ENCODE measurements at regions of chr2 and their contacts with region 1.

Region 1: GRCh38 chr2:121974897-121975661 is 219.6 kb downstream of the TSN start:
- DNase-seq: peak; percentile 29
- H3K4me3 Mint-ChIP-seq: peak overlapping the region; percentile 56
- H3K27ac Mint-ChIP-seq: no peak overlapping the region
- H3K4me1 Mint-ChIP-seq: peaks cover 5% of the 10 kb centered on the region
- H3K27me3 Mint-ChIP-seq: peaks cover 3% of the 10 kb centered on the region

Region 2: DNA sequence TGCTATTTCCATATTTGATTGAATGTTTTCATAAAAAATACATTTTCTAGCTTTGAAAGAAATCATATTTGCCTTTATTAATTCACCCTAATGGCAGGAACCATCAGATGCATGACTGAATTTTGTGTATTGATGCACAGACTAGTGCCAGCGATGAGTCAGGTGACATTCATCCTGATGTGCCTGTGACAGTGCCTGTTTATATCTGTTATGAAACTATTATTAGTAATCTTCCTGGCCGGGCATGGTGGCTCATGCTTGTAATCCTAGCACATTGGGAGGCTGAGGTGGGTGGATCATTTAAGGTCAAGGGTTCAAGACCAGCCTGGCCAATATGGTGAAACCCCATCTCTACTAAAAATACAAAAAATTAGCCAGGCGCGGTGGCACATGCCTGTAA is 49.6 kb before region 1 on chr2:
- intact Hi-C with region 1: no loop called
- DNase-seq: no peak
- H3K4me3 Mint-ChIP-seq: no peak overlapping the region
- H3K27ac Mint-ChIP-seq: no peak overlapping the region
- H3K4me1 Mint-ChIP-seq: no peaks in the 10 kb centered on the region
- H3K27me3 Mint-ChIP-seq: no peaks in the 10 kb centered on the region

Region 3: GRCh38 chr2:122145856-122146255 is 170.8 kb after region 1 on chr2:
- intact Hi-C with region 1: loop called (anchors 10 kb)
- DNase-seq: no peak
- H3K4me3 Mint-ChIP-seq: no peak overlapping the region
- H3K27ac Mint-ChIP-seq: no peak overlapping the region
- H3K4me1 Mint-ChIP-seq: no peaks in the 10 kb centered on the region
- H3K27me3 Mint-ChIP-seq: no peaks in the 10 kb centered on the region

Region 4: DNA sequence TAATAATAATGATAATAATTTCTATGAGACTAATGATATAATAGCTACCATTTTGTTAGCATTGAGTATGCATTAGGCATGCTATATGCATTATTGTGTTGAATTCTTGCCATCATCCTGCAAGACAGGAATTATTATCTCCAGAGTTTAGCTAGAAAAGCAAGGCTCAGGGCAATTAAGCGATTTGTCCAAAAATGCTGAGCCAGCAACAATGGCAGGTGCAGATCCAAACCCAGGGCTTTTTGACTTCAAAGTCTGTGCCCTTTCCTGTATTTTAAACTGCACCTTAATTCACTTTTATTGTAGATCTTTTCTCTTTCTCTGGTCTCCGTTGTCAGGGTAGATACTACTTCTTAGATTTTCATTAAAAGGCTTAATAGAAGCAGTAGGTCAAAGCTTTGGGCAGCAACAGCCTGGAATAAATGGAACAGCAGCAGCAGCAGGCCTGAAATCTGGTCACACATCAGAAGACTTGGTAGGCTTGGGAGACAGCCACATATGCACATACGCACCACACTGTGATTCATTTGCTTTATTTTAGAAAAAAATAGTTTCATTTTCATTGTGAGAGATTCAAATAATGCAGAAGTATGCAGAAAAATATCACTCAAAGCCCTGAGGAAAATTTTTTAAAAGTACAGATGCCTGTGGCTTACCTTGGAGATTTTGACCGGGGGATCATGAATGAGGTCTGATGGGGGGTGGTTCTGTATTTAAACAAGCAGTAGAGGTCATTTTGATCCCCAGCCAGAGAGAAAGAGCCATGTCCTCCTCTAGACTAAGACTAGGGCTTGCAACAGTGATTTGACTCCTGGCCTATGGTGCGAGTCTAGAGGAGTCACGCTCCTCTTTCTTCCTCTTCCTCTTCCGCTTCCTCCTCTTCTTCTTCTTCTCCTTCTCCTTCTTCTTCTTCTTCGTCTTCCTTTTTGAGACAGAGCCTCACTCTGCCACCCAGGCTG is 236.1 kb after region 1 on chr2:
- intact Hi-C with region 1: no loop called
- DNase-seq: no peak
- H3K4me3 Mint-ChIP-seq: no peak overlapping the region
- H3K27ac Mint-ChIP-seq: no peak overlapping the region
- H3K4me1 Mint-ChIP-seq: no peaks in the 10 kb centered on the region
- H3K27me3 Mint-ChIP-seq: no peaks in the 10 kb centered on the region

Region 5: GRCh38 chr2:122261911-122262310 is 286.8 kb after region 1 on chr2:
- intact Hi-C with region 1: no loop called
- DNase-seq: no peak
- H3K4me3 Mint-ChIP-seq: no peak overlapping the region
- H3K27ac Mint-ChIP-seq: no peak overlapping the region
- H3K4me1 Mint-ChIP-seq: no peaks in the 10 kb centered on the region
- H3K27me3 Mint-ChIP-seq: no peaks in the 10 kb centered on the region